ENCODE measurements at regions of chr20 and their contacts with region 1.

Region 1: DNA sequence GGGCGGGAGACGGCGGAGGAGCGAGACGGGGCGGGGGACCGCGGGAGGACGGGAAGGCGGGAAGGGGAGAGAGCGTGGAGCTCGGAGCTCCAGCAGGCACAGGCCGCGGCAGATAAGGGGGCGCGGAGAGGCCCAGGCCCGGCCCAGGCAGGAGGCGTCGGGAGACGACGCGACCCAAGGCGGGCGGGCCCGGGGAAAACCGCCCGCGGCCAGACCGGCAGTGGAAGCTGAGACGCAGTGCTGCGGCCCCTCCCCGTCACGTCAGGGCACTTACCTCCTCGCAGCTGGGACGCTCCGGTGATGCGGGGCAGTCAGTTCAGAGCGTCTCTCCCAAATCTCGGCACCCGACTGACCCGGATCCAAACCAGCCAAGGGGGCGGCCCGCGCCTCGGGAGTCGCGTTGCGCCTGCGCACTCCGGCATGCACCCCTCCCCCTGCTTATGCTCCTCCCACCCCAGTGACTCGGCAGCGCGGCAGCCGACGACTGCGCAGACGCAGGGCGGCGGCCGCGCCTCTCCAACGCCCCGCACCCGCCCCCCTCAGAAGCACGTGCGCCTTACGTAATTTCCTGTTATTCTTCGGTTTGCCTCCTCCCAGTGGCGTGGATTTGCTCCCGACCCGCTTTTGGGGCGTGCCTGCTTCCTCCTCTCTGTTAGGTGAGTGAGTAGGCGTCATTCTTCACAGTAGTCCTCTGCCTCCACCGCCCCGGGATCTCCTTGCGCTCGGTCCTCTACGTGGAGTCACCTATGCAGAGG is at the start of gene OSER1:
- DNase-seq: peak; percentile 98
- H3K4me3 Mint-ChIP-seq: peak within 1 kb of the TSS; percentile 99
- H3K27ac Mint-ChIP-seq: peak within 1 kb of the TSS; percentile 98
- H3K4me1 Mint-ChIP-seq: peaks cover 59% of the 10 kb centered on the region
- H3K27me3 Mint-ChIP-seq: no peaks in the 10 kb centered on the region
- total RNA-seq, gene OSER1: 22.0 and 23.4 TPM in 2 replicates

Region 2: GRCh38 chr20:43456809-43457639 is 753.6 kb before region 1 on chr20:
- intact Hi-C with region 1: loop called (anchors 2 kb)
- DNase-seq: peak; percentile 83
- H3K4me3 Mint-ChIP-seq: peak overlapping the region; percentile 88
- H3K27ac Mint-ChIP-seq: peak overlapping the region; percentile 100
- H3K4me1 Mint-ChIP-seq: peaks cover 34% of the 10 kb centered on the region
- H3K27me3 Mint-ChIP-seq: peaks cover 17% of the 10 kb centered on the region

Region 3: GRCh38 chr20:44153636-44154043 is 57.0 kb before region 1 on chr20:
- intact Hi-C with region 1: no loop called
- DNase-seq: no peak
- H3K4me3 Mint-ChIP-seq: no peak overlapping the region
- H3K27ac Mint-ChIP-seq: no peak overlapping the region
- H3K4me1 Mint-ChIP-seq: peaks cover 11% of the 10 kb centered on the region
- H3K27me3 Mint-ChIP-seq: peaks cover 4% of the 10 kb centered on the region

Region 4: GRCh38 chr20:44196271-44196670 is 14.3 kb before region 1 on chr20:
- intact Hi-C with region 1: loop called (anchors 1 kb)
- DNase-seq: no peak
- H3K4me3 Mint-ChIP-seq: no peak overlapping the region
- H3K27ac Mint-ChIP-seq: no peak overlapping the region
- H3K4me1 Mint-ChIP-seq: peaks cover 17% of the 10 kb centered on the region
- H3K27me3 Mint-ChIP-seq: no peaks in the 10 kb centered on the region

Region 5: GRCh38 chr20:44475694-44476560 is 265.3 kb after region 1 on chr20 and contains the start of gene TTPAL:
- intact Hi-C with region 1: loop called (anchors 1 kb)
- DNase-seq: peak; percentile 90
- H3K4me3 Mint-ChIP-seq: peak within 1 kb of the TSS; percentile 95
- H3K27ac Mint-ChIP-seq: peak within 1 kb of the TSS; percentile 93
- H3K4me1 Mint-ChIP-seq: peaks cover 20% of the 10 kb centered on the region
- H3K27me3 Mint-ChIP-seq: peaks cover 3% of the 10 kb centered on the region
- total RNA-seq, gene TTPAL: 22.9 and 24.7 TPM in 2 replicates

Region 6: GRCh38 chr20:44960103-44960852 is 749.7 kb after region 1 on chr20 and contains the start of gene TOMM34:
- intact Hi-C with region 1: loop called (anchors 5 kb)
- DNase-seq: peak; percentile 94
- H3K4me3 Mint-ChIP-seq: peak within 1 kb of the TSS; percentile 99
- H3K27ac Mint-ChIP-seq: peak within 1 kb of the TSS; percentile 100
- H3K4me1 Mint-ChIP-seq: peaks cover 74% of the 10 kb centered on the region
- H3K27me3 Mint-ChIP-seq: no peaks in the 10 kb centered on the region
- total RNA-seq, gene TOMM34: 53.0 and 55.4 TPM in 2 replicates

Measured in activated T-helper 1 cell treated with anti-CD3 and anti-CD28 coated beads, Interleukin-12 subunit alpha, Interleukin-12 subunit beta, Interleukin-2, Interleukin-4 antibody, amounts not matched to agents 30 ng/mL and 10 ng/mL and 1 ng/mL, durations not matched to agents 14 hours and 24 hours and 36 hours (primary cell).